IMR-90 (cell line): ENCODE measurements at regions of chr14 and their contacts with region 1.

Region 1: GRCh38 chr14:73644531-73645247 is at the start of gene DNAL1:
- DNase-seq: peak; percentile 85
- ATAC-seq: peak; percentile 99
- H3K4me3 ChIP-seq: peak within 1 kb of the TSS; percentile 63
- H3K27ac ChIP-seq: peak within 1 kb of the TSS; percentile 86
- H3K4me1 ChIP-seq: no peaks in the 10 kb centered on the region
- H3K27me3 ChIP-seq: no peaks in the 10 kb centered on the region
- CTCF ChIP-seq: no peak
- POLR2A ChIP-seq: peak; percentile 79
- RAD21 ChIP-seq: no peak
- total RNA-seq, gene DNAL1: 5.4 and 9.7 TPM in 2 replicates

Region 2: DNA sequence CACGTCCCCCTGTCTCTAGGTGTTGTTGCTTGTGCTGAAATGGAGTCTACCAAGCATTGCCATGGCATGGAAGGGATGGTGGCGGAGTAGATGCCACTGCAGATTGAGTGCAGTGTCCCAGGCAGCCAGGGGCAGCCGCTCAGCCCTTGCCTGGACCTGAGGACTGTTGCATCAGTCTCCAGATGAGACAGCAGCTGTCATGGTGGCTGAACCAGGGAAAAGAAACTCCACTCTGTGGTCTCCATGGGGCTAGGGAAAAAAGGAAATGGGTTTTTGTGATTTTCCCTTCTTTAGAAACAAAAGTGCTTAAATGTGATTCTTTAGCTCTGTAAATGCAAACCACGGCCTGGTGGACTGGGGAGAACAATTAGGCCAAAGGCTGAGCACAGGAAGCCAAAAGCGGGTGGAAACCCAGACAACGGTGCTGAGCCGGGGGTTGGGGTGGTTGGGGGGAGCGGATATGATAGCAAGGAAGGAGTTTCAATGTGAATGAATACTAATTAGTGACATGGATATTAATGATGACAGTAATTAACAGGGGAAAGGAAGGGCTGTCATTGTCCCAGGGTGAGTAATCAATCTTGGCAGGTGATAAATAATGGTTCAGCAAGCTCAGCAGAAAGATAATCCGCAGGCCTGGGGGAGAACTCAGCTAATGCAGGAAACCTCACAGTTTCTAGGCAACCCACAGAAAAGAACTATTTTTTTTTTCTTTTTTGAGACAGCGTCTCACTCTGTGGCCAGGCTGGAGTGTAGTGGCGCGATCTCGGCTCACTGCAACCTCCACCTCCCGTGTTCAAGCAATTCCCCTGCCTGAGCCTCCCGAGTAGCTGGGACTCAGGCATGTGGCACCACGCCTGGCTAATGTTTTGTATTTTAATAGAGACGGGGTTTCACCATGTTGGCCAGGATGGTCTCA is 1193.4 kb before region 1 on chr14:
- CTCF ChIA-PET with region 1: no interaction called
- POLR2A ChIA-PET with region 1: no interaction called
- dilution Hi-C with region 1: no loop called
- in situ Hi-C with region 1: no loop called
- intact Hi-C with region 1: no loop called
- DNase-seq: no peak
- ATAC-seq: no peak; the same call in 1 of the 2 replicates
- H3K4me3 ChIP-seq: no peak overlapping the region
- H3K27ac ChIP-seq: no peak overlapping the region
- H3K4me1 ChIP-seq: no peaks in the 10 kb centered on the region
- H3K27me3 ChIP-seq: peaks cover 28% of the 10 kb centered on the region
- CTCF ChIP-seq: no peak
- POLR2A ChIP-seq: no peak
- RAD21 ChIP-seq: no peak

Region 3: DNA sequence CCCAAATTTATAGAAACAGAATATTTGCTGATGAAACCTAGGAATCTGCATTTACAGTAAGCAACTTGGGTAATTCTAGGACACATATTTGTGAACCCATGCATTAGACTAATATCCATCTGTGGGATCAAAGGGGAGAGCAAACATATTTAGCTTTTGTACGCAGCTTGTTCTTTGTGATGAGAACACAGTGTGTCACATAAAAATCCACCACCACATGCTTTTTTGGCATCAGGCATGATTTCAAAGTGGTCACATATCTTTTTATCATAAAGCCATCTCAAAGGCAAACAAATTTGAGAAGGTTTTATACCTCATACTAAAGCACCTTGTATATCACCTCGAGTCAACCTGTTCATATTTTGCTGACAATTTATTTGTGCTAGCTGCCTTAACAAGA is 15.8 kb after region 1 on chr14:
- CTCF ChIA-PET with region 1: interaction called, 5 read pairs
- POLR2A ChIA-PET with region 1: interaction called, 15 read pairs
- dilution Hi-C with region 1: no loop called
- in situ Hi-C with region 1: no loop called
- intact Hi-C with region 1: no loop called
- DNase-seq: no peak
- ATAC-seq: no peak
- H3K4me3 ChIP-seq: no peak overlapping the region
- H3K27ac ChIP-seq: no peak overlapping the region
- H3K4me1 ChIP-seq: no peaks in the 10 kb centered on the region
- H3K27me3 ChIP-seq: no peaks in the 10 kb centered on the region
- CTCF ChIP-seq: no peak
- POLR2A ChIP-seq: no peak
- RAD21 ChIP-seq: no peak